ENCODE measurements at regions of chr2 and their contacts with region 1.

Region 1: DNA sequence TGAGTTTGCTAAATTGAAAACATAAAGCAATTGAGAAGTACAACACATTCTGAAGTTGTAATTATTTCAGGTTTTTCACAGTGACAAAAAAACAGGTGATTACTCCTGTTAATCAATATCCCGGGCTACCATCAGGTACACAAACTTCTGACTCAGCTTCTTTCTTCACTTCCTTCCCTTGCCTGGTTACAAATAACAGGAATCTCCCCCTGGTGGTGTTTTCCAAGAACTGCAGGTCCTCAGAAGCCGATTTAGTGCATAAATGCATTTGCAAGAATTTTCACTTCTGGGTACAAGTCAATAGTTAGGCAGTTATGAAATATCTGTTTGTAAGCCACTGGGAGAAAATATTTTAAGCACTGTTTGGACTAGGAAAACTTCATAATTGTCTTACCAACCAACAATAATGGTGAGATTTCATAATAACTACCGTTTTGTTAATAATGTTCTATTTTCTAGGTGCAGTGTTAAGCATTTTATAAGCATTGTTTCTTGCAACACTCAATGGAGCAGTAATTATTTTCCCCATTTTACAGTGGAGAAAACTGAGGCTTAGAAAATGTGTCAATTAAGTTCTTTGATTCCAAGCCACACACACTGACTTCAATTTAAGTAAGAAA is 12.4 kb upstream of the GMCL1 start:
- DNase-seq: peak in 7 of 10 donors; percentile 63 to 94 (median 71)
- H3K4me3 ChIP-seq: no peak overlapping the region
- H3K27ac ChIP-seq: peak overlapping the region in 1 of 59 donors; percentile 20
- H3K27me3 ChIP-seq: no peaks in the 10 kb centered on the region
- CTCF ChIP-seq: peak; percentile 79 to 100 (median 96)

Region 2: DNA sequence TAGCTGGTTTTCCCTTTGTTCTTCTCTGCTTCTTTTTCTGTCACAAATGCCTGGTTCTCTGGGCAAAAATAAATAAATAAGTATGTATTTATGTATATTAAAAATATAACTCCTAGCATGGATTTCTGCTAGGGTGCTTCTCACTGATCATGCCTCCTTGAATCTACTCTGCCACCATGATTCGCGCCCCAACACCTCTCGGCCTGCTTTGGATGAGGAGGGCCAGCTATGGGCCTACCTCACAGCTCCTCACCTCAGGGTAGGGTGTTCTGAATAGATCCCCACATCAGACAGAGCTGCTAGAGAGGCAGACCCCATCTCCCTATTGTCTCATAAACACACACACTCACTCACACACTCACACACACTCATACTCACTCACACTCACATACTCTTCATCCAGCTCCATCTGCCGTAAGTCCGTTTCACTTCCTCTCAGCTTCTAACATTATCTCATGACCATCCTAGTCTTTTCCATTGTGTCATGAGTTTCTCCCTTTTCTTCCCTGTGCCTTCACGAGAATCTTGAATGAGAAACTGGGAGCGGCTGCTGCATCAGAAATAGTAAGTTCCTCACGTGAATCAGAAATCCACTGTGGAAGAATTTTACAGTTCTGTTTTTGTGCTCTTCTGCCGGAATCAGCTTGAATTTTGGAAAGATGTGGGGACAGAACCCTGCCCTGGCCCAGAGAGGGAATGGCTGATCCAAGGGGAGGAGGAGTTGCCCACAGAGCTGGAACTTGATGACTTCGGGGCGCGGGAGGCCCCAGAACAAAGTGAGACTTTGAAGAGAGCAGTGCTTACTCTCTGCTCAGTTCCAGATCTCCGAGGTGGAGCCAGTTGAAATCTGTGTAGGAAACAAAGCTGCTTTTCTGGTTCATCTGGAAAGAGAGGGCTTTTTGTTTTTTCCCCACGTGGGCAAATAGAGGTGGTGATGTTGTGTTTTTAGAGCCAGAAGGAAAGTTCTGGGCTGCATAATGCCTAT is 54.2 kb before region 1 on chr2:
- intact Hi-C with region 1: loop called in 1 of 2 experiments (anchors 5 kb)
- DNase-seq: peak in 8 of 10 donors; percentile 38 to 75 (median 52)
- H3K4me3 ChIP-seq: peak overlapping the region in 56 of 59 donors; percentile 2 to 67 (median 41)
- H3K27ac ChIP-seq: peak overlapping the region; percentile 32 to 99 (median 90)
- H3K27me3 ChIP-seq: no peaks in the 10 kb centered on the region
- CTCF ChIP-seq: peak in 1 of 56 donors; percentile 31